ENCODE measurements at regions of chr1 and their contacts with region 1.

Region 1: GRCh38 chr1:156282479-156283222 is at the start of gene SMG5:
- DNase-seq: peak; percentile 97
- ATAC-seq: peak; percentile 87 to 90
- H3K4me3 ChIP-seq: peak within 1 kb of the TSS; percentile 72 to 97 (median 82)
- H3K27ac ChIP-seq: peak within 1 kb of the TSS; percentile 90 to 99 (median 94)
- H3K4me1 ChIP-seq: peaks cover 27 to 33% of the 10 kb centered on the region in 2 donors
- H3K27me3 ChIP-seq: no peaks in the 10 kb centered on the region
- CTCF ChIP-seq: no peak
- POLR2A ChIP-seq: peak; percentile 91 to 95
- total RNA-seq, gene SMG5: 47.4 to 83.1 (median 62.7) TPM

Region 2: GRCh38 chr1:155698382-155699038 is 584.1 kb before region 1 on chr1:
- in situ Hi-C with region 1: no loop called
- intact Hi-C with region 1: no loop called
- DNase-seq: no peak
- ATAC-seq: no peak
- H3K4me3 ChIP-seq: no peak overlapping the region
- H3K27ac ChIP-seq: no peak overlapping the region
- H3K4me1 ChIP-seq: peaks cover 26 to 31% of the 10 kb centered on the region in 2 donors
- H3K27me3 ChIP-seq: no peaks in the 10 kb centered on the region
- CTCF ChIP-seq: no peak
- POLR2A ChIP-seq: no peak

Region 3: GRCh38 chr1:156338180-156338973 is 55.7 kb after region 1 on chr1 and contains the starts of genes CCT3 and TSACC:
- in situ Hi-C with region 1: no loop called
- intact Hi-C with region 1: loop called (anchors 1 kb)
- DNase-seq: peak; percentile 98 to 100
- ATAC-seq: peak; percentile 95 to 98
- H3K4me3 ChIP-seq: peak within 1 kb of the TSS; percentile 69 to 91 (median 84)
- H3K27ac ChIP-seq: peak within 1 kb of the TSS; percentile 92 to 97 (median 96)
- H3K4me1 ChIP-seq: peaks cover 12 to 19% of the 10 kb centered on the region in 2 donors
- H3K27me3 ChIP-seq: no peaks in the 10 kb centered on the region
- CTCF ChIP-seq: no peak
- POLR2A ChIP-seq: peak; percentile 72 to 86
- total RNA-seq, gene CCT3: 147 to 189 (median 180) TPM
- total RNA-seq, gene TSACC: not detected